Heart left ventricle (tissue), 16 donors: ENCODE measurements at regions of chr1 and their contacts with region 1.

Region 1: GRCh38 chr1:65525266-65526048 is 105.0 kb downstream of the LEPR start:
- DNase-seq: peak in 3 of 5 donors; percentile 9 to 69 (median 25)
- ATAC-seq: peak in 2 of 4 donors; percentile 49 to 75
- H3K4me3 ChIP-seq: peak overlapping the region; percentile 45 to 73 (median 62)
- H3K27ac ChIP-seq: peak overlapping the region in 6 of 12 donors; percentile 12 to 66 (median 44)
- H3K4me1 ChIP-seq: peaks cover 0 to 24% (median 5%) of the 10 kb centered on the region in 12 donors
- H3K27me3 ChIP-seq: peaks cover 0 to 34% (median 7%) of the 10 kb centered on the region in 9 donors
- CTCF ChIP-seq: no peak
- POLR2A ChIP-seq: no peak

Region 2: DNA sequence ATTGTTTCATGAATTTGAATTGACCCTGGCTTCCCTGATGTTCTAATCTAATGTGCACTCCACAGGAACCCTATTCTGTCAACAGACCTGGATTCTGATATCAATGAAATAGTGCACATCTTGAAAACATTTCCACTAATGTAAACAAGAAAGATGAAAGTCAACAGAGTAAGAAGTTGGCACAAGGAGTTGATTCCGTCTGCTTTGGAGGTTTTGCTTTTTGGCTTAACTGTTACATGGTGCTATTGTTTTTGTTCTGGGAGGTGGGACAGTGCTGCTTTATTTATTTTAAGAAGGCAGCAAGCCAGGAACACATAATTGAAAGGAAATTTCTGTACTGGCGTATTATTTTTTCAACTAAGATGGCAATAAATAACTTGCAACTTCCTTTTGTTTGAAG is 31.7 kb before region 1 on chr1:
- intact Hi-C with region 1: loop called in 2 of 10 experiments (anchors 5 kb)
- DNase-seq: no peak
- ATAC-seq: peak in 3 of 4 donors; percentile 31 to 55 (median 47)
- H3K4me3 ChIP-seq: no peak overlapping the region
- H3K27ac ChIP-seq: peak overlapping the region in 1 of 12 donors; percentile 36
- H3K4me1 ChIP-seq: peaks cover 0 to 22% (median 0%) of the 10 kb centered on the region in 12 donors
- H3K27me3 ChIP-seq: no peaks in the 10 kb centered on the region
- CTCF ChIP-seq: no peak
- POLR2A ChIP-seq: no peak